BJ (cell line): ENCODE measurements at regions of chr2 and their contacts with region 1.

Region 1: GRCh38 chr2:110770959-110771431 is 38.6 kb downstream of the ACOXL start:
- DNase-seq: peak; percentile 9
- H3K4me3 ChIP-seq: no peak overlapping the region
- H3K27me3 ChIP-seq: peaks cover 17% of the 10 kb centered on the region
- CTCF ChIP-seq: no peak

Region 2: DNA sequence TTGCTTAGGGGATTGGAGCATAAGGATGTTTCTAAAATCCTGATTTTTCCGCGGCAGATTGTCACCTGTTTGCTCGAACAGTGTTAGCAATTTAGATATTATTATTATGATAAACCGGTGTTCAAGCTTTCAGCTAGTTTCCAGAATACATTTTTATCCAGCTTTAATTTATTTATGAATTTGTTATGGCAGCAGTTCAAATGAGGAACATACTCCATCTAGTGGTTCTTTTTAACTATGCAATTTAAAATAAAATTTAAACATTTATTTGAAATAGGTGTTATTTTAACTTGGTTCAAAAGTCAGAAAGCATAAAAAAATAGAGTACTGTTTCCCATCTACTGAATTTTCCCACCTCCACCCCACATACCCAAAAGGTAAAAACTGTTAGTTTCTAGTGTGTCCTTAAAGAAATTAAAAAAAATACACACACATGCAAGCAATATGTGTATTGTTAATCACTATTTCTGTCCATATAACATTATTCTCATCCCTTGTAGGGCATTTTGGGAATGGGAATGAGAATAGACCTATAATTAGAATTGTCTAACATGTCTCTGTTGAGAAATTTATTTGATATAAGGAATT is 15.4 kb before region 1 on chr2:
- CTCF ChIA-PET with region 1: interaction called, 10 read pairs
- POLR2A ChIA-PET with region 1: no interaction called
- DNase-seq: no peak
- H3K4me3 ChIP-seq: no peak overlapping the region
- H3K27me3 ChIP-seq: no peaks in the 10 kb centered on the region; the same call in none of the 2 replicates
- CTCF ChIP-seq: peak; percentile 50